ENCODE measurements at regions of chr1 and their contacts with region 1.

Region 1: DNA sequence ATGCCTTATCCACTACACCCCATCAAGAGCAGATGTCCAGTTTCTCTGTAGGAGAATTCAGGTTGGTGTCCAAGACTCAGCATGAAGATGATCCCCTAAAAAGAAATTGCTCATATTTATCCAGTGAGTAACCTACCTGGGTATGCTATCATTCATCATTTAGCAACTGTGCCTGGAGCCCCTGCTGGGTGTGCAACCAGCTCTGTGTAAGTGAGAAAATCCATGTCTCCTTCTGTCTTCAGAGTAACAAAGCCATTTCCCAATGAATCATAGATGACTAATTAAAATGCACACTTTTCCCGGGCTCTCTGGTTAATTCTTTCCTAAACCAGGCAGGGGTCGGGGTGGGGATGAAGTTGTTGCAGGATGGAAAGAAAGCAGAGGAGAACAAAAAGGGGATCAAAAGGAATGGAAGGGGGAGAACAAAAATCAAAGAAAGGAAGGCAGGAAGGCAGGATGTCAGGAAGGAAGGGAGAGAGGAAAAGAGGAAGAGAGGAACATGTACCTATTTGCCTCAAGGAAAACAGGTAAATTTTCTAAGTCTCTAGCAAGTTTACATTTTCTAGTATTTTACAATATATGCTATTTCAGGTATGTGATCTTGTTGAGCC is 35.9 kb downstream of the OLFML3 start:
- DNase-seq: no peak
- ATAC-seq: no peak
- H3K4me3 ChIP-seq: no peak overlapping the region
- H3K27ac ChIP-seq: no peak overlapping the region
- H3K4me1 ChIP-seq: no peaks in the 10 kb centered on the region
- H3K27me3 ChIP-seq: no peaks in the 10 kb centered on the region

Region 2: GRCh38 chr1:113949007-113949406 is 66.2 kb before region 1 on chr1:
- intact Hi-C with region 1: no loop called
- DNase-seq: no peak
- ATAC-seq: peak; percentile 47
- H3K4me3 ChIP-seq: no peak overlapping the region
- H3K27ac ChIP-seq: no peak overlapping the region
- H3K4me1 ChIP-seq: peaks cover 3 to 6% of the 10 kb centered on the region in 2 donors
- H3K27me3 ChIP-seq: no peaks in the 10 kb centered on the region

Region 3: DNA sequence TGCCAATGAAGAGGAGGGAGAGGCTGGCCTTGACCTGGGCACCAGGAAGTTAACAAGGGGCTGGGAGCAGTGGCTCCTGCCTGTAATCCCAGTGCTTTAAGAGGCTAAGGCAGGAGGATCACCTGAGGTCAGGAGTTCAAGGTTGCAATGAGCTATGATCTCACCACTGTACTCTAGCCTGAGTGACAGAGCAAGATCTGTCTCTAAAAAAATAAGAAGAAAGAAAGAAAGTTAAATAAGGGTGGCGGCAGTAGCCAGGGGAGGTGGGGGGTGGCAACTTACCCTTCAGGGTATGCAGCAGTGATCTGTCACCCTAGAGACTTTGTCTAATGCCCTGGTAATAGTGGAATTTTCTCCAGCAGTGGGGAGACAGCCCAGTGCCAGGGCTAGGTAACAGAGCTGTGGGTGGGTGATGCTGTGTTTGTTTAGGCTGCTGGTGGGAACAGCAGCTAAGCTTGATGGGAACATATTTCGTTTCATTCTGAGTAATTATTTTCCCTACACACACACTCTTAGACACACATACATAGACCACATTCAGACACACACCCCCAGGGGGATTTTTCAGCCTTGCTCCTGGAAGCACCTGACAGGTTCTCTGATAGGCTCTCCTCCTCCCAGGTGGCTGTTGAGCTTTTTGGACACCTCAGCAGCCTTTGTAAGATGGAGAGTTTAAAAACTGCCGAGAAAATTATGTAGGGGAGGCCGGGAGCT is 149.8 kb after region 1 on chr1:
- intact Hi-C with region 1: loop called in 1 of 2 experiments (anchors 10 kb)
- DNase-seq: no peak
- ATAC-seq: no peak
- H3K4me3 ChIP-seq: no peak overlapping the region
- H3K27ac ChIP-seq: no peak overlapping the region
- H3K4me1 ChIP-seq: no peaks in the 10 kb centered on the region
- H3K27me3 ChIP-seq: no peaks in the 10 kb centered on the region